ENCODE measurements at regions of chr9 and their contacts with region 1.

Region 1: DNA sequence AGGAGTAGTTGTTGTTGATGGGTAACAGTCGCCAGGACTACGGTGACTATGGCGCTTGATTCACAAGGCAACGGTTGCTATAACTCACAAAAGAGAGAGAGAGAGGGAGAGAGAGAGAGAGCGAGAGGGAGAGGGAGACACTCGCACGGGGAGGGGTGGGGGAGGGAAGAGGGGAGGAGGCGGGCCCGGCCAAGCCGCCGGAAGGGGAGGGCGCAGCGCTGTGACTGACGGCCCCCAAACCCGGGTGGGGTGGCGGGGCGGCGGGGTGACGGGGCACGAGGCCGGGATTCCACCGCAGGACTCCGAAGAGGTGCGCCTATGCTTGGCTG is at the start of gene RFX3:
- DNase-seq: peak in 1 of 2 experiments; percentile 74
- H3K4me3 ChIP-seq: peak within 1 kb of the TSS; percentile 78 to 97 (median 92)
- H3K27ac ChIP-seq: peak within 1 kb of the TSS; percentile 100
- H3K4me1 ChIP-seq: peaks cover 0 to 8% (median 3%) of the 10 kb centered on the region in 4 experiments; a peak in 3 of 7 replicates
- H3K27me3 ChIP-seq: no peaks in the 10 kb centered on the region
- CTCF ChIP-seq: no peak
- EP300 ChIP-seq: peak in 1 of 2 experiments; percentile 82; a peak in 1 of 3 replicates
- POLR2A ChIP-seq: peak in 1 of 2 experiments; percentile 42; a peak in 1 of 3 replicates
- RAD21 ChIP-seq: no peak
- total RNA-seq, gene RFX3: 19.6 and 22.6 TPM in 2 replicates

Region 2: DNA sequence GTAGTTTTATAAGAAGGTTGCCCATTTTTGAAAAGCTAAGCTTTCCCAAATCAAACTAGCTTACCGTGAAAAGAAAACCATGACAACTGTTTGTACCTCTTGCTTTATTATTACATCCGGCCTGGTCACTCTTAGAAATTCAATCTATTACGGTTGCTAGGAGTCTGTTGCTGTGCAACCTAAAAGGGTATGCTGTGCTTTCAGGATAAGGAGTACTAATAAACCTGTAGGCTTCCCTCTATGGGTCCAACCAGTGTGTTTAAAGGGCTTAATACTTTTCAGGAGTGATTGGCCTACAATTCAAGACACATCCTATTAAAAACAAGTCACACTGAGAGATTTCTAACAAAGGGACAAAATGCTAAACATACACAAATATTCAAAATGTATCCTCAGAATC is 27.1 kb before region 1 on chr9:
- CTCF ChIA-PET with region 1: no interaction called
- POLR2A ChIA-PET with region 1: interaction called, 13 read pairs
- DNase-seq: no peak
- H3K4me3 ChIP-seq: no peak overlapping the region
- H3K27ac ChIP-seq: no peak overlapping the region; the same call in 1 of the 2 replicates
- H3K4me1 ChIP-seq: peaks cover 0 to 6% (median 1%) of the 10 kb centered on the region in 4 experiments; a peak in 3 of 7 replicates
- H3K27me3 ChIP-seq: no peaks in the 10 kb centered on the region
- CTCF ChIP-seq: no peak
- EP300 ChIP-seq: no peak
- POLR2A ChIP-seq: no peak
- RAD21 ChIP-seq: no peak

Region 3: GRCh38 chr9:3541206-3541605 is 15.4 kb after region 1 on chr9:
- CTCF ChIA-PET with region 1: no interaction called
- POLR2A ChIA-PET with region 1: interaction called, 16 read pairs
- DNase-seq: no peak
- H3K4me3 ChIP-seq: no peak overlapping the region
- H3K27ac ChIP-seq: no peak overlapping the region
- H3K4me1 ChIP-seq: no peaks in the 10 kb centered on the region
- H3K27me3 ChIP-seq: no peaks in the 10 kb centered on the region
- CTCF ChIP-seq: no peak
- EP300 ChIP-seq: no peak
- POLR2A ChIP-seq: no peak
- RAD21 ChIP-seq: no peak

Measured in H1 (cell line).